ENCODE measurements at regions of chr12 and their contacts with region 1.

Region 1: DNA sequence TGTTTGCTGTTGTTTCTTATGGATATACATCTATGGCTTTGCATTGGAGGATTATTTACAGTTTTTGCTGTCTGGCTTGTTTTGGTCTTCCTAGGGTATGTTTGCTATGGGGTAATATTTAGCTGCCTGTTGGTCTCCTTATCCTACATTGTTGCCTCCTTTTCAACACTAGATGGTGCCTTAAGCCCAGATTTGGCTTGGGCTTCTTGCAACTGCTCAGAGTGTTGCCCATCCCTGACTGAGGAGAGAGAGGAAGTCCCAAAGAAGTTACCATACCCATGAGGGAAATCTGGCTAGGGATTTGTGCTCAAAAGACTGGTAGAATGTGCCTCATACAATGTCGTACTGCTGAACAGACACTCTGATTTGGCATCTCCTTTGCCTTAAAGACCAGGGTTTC is 94.6 kb upstream of the MUCL1 start:
- DNase-seq: peak; percentile 38
- H3K4me3 Mint-ChIP-seq: no peak overlapping the region
- H3K27ac Mint-ChIP-seq: no peak overlapping the region
- H3K4me1 Mint-ChIP-seq: peaks cover 22% of the 10 kb centered on the region
- H3K27me3 Mint-ChIP-seq: no peaks in the 10 kb centered on the region

Region 2: DNA sequence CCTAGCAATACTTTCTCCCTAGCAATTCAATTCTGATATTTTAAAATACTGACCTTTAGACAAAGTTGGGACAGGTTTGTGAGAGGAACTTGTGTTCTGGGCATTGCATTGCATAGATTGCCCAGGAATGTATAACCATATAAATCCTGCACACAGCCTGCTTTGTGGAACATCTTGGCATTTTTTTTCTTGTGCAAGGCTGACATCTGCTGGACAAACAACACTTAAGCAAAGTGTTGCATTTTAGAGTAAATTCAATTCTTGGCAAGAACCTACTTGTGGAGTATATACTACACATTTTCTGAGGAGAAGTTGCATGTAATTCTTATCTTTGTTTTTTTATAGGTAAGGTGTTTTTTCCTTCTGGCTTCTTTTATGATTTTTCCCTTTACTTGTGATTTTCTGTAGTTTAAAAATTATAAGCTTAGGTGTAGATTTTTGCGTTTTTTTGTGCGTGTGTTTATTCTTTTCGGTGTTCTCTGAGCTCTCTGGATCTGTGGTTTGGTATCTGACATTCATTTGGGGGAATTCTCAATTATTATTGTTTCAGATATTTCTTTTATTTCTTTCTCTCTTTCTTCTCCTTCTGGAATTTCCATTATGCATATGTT is 198.4 kb after region 1 on chr12:
- CTCF ChIA-PET with region 1: interaction called, 11 read pairs
- DNase-seq: peak; percentile 65
- H3K4me3 Mint-ChIP-seq: no peak overlapping the region
- H3K27ac Mint-ChIP-seq: no peak overlapping the region
- H3K4me1 Mint-ChIP-seq: peaks cover 73% of the 10 kb centered on the region
- H3K27me3 Mint-ChIP-seq: no peaks in the 10 kb centered on the region